ENCODE measurements at regions of chr11 and their contacts with region 1.

Region 1: GRCh38 chr11:119067371-119068222 is at the start of gene VPS11:
- DNase-seq: peak; percentile 95
- H3K4me3 ChIP-seq: peak within 1 kb of the TSS; percentile 56 to 97 (median 64)
- H3K27ac ChIP-seq: peak within 1 kb of the TSS; percentile 45
- H3K4me1 ChIP-seq: peaks cover 3% of the 10 kb centered on the region
- H3K27me3 ChIP-seq: no peaks in the 10 kb centered on the region
- CTCF ChIP-seq: no peak
- POLR2A ChIP-seq: peak; percentile 91
- total RNA-seq, gene VPS11: 27.0 and 31.0 TPM in 2 replicates

Region 2: GRCh38 chr11:118988280-118988679 is 79.3 kb before region 1 on chr11:
- CTCF ChIA-PET with region 1: no interaction called
- POLR2A ChIA-PET with region 1: no interaction called
- dilution Hi-C with region 1: no loop called
- intact Hi-C with region 1: no loop called
- DNase-seq: no peak
- H3K4me3 ChIP-seq: no peak overlapping the region
- H3K27ac ChIP-seq: no peak overlapping the region
- H3K4me1 ChIP-seq: no peaks in the 10 kb centered on the region
- H3K27me3 ChIP-seq: no peaks in the 10 kb centered on the region
- CTCF ChIP-seq: no peak
- POLR2A ChIP-seq: no peak

Region 3: DNA sequence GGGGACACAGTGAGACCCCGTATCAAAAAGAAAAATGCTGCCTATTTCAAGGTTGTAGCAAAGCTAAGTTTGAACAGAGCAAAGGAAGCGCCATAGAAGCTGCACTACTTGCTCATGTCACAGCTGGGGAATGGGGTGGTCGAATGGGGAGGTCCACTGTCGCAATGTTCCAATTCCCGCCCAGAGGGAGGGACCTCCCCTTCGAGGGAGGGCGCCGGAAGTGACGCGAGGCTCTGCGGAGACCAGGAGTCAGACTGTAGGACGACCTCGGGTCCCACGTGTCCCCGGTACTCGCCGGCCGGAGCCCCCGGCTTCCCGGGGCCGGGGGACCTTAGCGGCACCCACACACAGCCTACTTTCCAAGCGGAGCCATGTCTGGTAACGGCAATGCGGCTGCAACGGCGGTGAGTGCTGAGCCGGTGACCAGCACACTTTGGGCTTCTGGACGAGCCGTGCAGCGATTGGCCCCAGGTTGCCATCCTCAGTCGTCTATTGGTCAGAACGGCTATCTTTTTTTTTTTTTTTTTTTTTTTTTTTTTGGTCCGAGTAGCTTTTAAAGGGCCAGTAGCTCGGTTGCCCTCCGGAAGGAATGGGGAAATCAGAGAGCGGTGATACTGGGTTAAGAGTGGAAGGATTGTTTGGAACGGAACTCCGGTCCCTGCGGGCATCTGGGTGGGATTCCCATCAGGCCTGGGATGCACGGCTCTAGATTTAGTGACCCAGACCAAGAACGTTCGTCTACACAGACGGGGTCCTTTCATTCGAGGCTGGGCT is 17.3 kb after region 1 on chr11 and contains the start of gene HMBS:
- CTCF ChIA-PET with region 1: interaction called, 13 read pairs
- POLR2A ChIA-PET with region 1: interaction called, 13 read pairs
- dilution Hi-C with region 1: no loop called
- intact Hi-C with region 1: loop called (anchors 1 kb)
- DNase-seq: peak; percentile 95
- H3K4me3 ChIP-seq: peak within 1 kb of the TSS; percentile 10 to 77 (median 70)
- H3K27ac ChIP-seq: peak within 1 kb of the TSS; percentile 49
- H3K4me1 ChIP-seq: peaks cover 12% of the 10 kb centered on the region
- H3K27me3 ChIP-seq: no peaks in the 10 kb centered on the region
- CTCF ChIP-seq: no peak
- POLR2A ChIP-seq: peak; percentile 97
- total RNA-seq, gene HMBS: 13.5 and 16.1 TPM in 2 replicates

Region 4: GRCh38 chr11:119095066-119095880 is 27.7 kb after region 1 on chr11:
- CTCF ChIA-PET with region 1: interaction called, 7 read pairs
- POLR2A ChIA-PET with region 1: interaction called, 10 read pairs
- dilution Hi-C with region 1: no loop called
- intact Hi-C with region 1: loop called (anchors 2 kb)
- DNase-seq: peak; percentile 100
- H3K4me3 ChIP-seq: peak overlapping the region; percentile 70 to 95 (median 90)
- H3K27ac ChIP-seq: peak overlapping the region; percentile 59
- H3K4me1 ChIP-seq: peaks cover 27% of the 10 kb centered on the region
- H3K27me3 ChIP-seq: no peaks in the 10 kb centered on the region
- CTCF ChIP-seq: peak in 1 of 2 donors; percentile 1
- POLR2A ChIP-seq: peak; percentile 100

Region 5: GRCh38 chr11:119101759-119102423 is 34.3 kb after region 1 on chr11 and contains the start of gene DPAGT1:
- CTCF ChIA-PET with region 1: interaction called, 7 read pairs
- POLR2A ChIA-PET with region 1: interaction called, 3 read pairs
- dilution Hi-C with region 1: no loop called
- intact Hi-C with region 1: loop called (anchors 1 kb)
- DNase-seq: peak; percentile 96
- H3K4me3 ChIP-seq: peak within 1 kb of the TSS; percentile 81 to 97 (median 86)
- H3K27ac ChIP-seq: peak within 1 kb of the TSS; percentile 94
- H3K4me1 ChIP-seq: peaks cover 21% of the 10 kb centered on the region
- H3K27me3 ChIP-seq: no peaks in the 10 kb centered on the region
- CTCF ChIP-seq: no peak
- POLR2A ChIP-seq: no peak
- total RNA-seq, gene DPAGT1: 48.4 and 62.0 TPM in 2 replicates

Region 6: GRCh38 chr11:119196833-119197483 is 129.4 kb after region 1 on chr11:
- CTCF ChIA-PET with region 1: interaction called, 3 read pairs
- POLR2A ChIA-PET with region 1: no interaction called
- dilution Hi-C with region 1: no loop called
- intact Hi-C with region 1: loop called (anchors 2 kb)
- DNase-seq: peak; percentile 81
- H3K4me3 ChIP-seq: no peak overlapping the region
- H3K27ac ChIP-seq: no peak overlapping the region
- H3K4me1 ChIP-seq: no peaks in the 10 kb centered on the region
- H3K27me3 ChIP-seq: no peaks in the 10 kb centered on the region
- CTCF ChIP-seq: peak; percentile 69 to 70
- POLR2A ChIP-seq: no peak

Region 7: DNA sequence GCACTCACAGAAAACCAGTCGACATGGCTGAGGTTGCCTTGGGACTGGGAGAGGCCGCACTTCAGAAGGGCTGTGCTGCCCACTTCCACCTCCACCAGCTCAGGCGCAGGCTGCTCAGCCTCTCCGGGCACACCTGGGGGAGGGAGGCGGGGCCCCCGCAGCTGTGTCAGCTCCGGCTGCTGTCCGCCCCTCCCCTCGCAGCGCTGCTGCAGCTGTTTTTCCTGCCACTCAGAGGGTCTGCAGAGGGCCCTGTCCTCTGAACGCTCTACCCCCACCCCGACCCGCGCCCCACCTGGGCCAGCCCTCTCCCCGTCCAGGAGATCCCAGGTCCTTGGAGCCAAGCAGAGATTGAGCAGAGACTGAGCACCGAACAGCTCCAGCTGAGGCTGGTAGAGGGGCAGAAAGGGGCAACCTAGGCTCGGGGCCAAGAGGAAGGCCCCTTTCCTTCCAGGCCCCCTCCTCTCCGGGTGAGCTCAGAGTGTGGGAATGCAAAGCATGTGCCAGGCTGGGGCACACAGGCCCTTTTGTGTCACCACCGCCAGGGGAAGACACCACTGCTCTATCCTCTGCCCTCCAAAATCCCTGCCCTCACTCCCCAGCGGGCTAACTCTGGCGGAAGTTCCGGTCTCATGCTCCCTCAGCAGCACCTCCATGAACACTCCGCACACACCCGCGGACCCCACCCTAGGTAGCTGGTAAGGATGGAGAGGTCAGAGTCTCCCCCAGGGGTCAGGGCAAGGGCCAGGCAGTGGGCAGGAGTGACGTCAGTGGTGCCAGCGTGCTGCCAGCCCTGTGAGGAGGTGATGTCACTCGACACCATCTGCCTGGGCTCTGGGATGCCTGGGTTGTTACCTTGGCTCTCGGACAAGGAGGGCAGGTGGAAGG is 247.8 kb after region 1 on chr11:
- CTCF ChIA-PET with region 1: no interaction called
- POLR2A ChIA-PET with region 1: no interaction called
- dilution Hi-C with region 1: no loop called
- intact Hi-C with region 1: loop called (anchors 5 kb)
- DNase-seq: peak; percentile 49
- H3K4me3 ChIP-seq: peak overlapping the region; percentile 87 to 93 (median 89)
- H3K27ac ChIP-seq: peak overlapping the region; percentile 80
- H3K4me1 ChIP-seq: peaks cover 44% of the 10 kb centered on the region
- H3K27me3 ChIP-seq: no peaks in the 10 kb centered on the region
- CTCF ChIP-seq: peak; percentile 16 to 46
- POLR2A ChIP-seq: no peak

Measured in endothelial cell of umbilical vein (primary cell).